Psoas muscle (tissue), 8 donors: ENCODE measurements at regions of chr5 and their contacts with region 1.

Region 1: DNA sequence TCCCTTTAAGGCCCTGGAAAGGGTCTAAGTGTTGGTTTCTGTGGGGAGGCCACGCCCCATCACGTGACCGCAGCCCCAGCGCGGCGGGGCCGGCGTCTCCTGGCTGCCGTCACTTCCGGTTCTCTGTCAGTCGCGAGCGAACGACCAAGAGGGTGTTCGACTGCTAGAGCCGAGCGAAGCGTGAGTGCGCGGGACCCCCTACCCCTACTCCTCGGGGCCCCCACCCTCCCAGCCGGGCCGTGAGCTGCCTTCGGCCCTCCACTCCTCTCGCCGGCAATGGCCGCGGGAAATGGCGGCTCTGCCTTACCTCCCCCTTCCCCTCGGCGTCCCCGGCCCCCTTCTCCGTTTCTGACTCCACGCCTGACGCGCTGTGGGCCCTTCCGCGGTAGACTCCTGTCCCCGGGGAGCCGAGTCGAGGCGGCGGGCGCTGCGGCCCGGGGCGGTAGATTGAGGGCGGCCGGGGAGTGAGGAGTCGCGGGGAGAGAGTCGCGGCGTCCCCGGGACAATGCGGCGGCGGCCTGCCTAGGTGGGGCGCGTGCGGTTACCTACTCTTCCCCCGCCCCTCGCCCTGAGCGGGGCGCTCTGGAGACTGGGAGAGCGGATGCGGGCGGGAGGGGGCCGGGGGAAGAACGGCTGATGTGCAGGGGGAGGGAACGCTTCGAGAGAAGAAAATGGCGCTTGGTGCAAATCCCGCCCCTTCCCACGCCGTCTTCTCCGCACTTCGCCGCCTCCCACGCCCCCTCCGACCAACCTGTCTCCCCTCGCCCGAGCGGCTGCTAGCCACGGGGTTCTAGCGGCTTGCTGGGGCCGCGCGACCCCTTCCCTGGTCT is at the start of gene SUB1:
- DNase-seq: peak; percentile 94 to 96
- ATAC-seq: peak; percentile 96 to 99 (median 97)
- H3K4me3 ChIP-seq: peak within 1 kb of the TSS; percentile 96
- H3K27ac ChIP-seq: peak within 1 kb of the TSS; percentile 100
- H3K4me1 ChIP-seq: peaks cover 13% of the 10 kb centered on the region
- H3K27me3 ChIP-seq: no peaks in the 10 kb centered on the region
- CTCF ChIP-seq: no peak
- total RNA-seq, gene SUB1: 112 to 174 (median 150) TPM

Region 2: GRCh38 chr5:32444431-32445286 is 141.0 kb before region 1 on chr5 and contains the start of gene ZFR:
- intact Hi-C with region 1: loop called in 1 of 2 experiments (anchors 2 kb)
- DNase-seq: peak; percentile 94 to 97
- ATAC-seq: peak; percentile 98 to 99 (median 98)
- H3K4me3 ChIP-seq: peak within 1 kb of the TSS; percentile 97
- H3K27ac ChIP-seq: peak within 1 kb of the TSS; percentile 95
- H3K4me1 ChIP-seq: peaks cover 17% of the 10 kb centered on the region
- H3K27me3 ChIP-seq: no peaks in the 10 kb centered on the region
- CTCF ChIP-seq: no peak
- total RNA-seq, gene ZFR: 53.1 to 73.5 (median 68.8) TPM

Region 3: DNA sequence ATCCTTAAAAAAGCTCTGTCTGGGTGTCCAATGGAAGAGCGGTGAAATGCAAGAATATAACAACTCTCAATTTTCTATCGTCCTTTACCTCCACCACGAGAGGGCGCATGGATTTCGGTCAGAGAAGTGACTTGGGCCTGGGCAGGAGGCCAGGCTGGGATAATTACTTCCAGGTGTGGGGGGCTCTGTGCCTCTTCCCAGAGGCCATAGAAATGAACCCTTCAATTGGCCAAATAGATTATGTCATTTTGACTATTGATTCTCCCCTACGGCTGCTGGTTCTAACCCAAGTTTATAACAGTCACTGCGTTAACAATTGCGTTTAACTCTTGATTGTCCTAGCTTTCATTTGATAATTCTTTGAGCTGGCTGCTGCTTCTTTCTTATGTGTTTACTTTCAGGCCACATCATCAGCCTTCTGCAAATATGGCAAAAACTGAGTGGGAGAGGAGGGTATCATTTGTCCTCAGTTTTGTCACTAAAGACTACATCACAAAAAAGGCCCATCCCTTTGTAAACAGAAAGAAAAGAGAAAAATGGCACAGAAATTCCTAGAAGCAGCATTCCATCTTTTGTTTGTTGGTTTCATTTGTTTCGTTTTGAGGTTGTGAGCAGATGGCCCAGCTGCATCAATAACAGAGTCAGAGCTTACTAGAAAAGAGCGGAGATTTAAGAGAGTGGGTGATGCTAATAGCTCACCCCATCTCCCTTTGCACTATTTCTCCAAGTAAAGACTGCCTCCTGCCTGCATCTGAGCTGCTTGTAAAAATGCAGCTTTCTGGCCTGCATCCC is 95.7 kb before region 1 on chr5:
- intact Hi-C with region 1: loop called (anchors 1 to 5 kb)
- DNase-seq: peak; percentile 80 to 87
- ATAC-seq: peak; percentile 63 to 85 (median 68)
- H3K4me3 ChIP-seq: no peak overlapping the region
- H3K27ac ChIP-seq: no peak overlapping the region
- H3K4me1 ChIP-seq: no peaks in the 10 kb centered on the region
- H3K27me3 ChIP-seq: no peaks in the 10 kb centered on the region
- CTCF ChIP-seq: peak; percentile 74

Region 4: DNA sequence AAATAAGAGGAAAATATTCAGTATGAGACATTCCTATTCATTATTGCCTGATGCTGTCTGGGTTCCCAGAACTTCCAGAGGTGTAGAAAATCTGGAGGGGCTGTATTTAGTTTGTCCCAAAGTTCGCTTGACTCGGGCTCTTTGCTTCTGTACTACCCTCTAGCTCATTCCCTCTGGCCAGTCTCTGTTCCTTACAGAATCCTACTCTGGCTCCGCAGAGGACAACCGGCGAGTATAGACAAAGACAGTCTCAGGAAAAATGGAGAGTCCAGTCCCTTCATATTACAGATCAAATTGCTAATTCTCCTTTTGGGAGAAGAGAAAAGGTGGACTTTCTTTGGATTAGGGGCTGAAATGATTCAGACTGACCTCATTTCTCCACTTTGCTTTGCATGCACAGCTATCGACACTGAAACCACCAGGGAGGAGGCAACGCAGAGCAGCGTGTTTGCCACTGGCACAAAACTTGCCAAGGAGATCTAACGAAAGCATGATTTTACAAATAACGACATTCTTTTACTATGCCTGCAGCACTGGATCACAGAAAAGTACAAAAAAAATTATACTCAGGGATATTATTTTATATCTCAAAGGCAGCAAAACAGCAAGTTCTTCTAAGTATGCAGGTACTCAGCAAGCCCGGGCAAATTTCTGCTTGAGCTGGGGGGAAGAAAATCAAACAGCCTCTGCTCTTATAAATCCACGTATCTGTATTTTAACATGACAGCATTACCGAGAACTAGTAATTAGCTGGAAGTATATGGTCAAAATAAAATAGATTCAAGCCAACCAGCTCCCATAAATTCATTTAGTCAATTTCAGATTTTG is 405.1 kb after region 1 on chr5:
- intact Hi-C with region 1: no loop called
- DNase-seq: no peak
- ATAC-seq: no peak
- H3K4me3 ChIP-seq: no peak overlapping the region
- H3K27ac ChIP-seq: no peak overlapping the region
- H3K4me1 ChIP-seq: no peaks in the 10 kb centered on the region
- H3K27me3 ChIP-seq: peaks cover 0 to 4% (median 0%) of the 10 kb centered on the region in 3 donors
- CTCF ChIP-seq: no peak